Activated T-helper 2 cell treated with anti-CD3 and anti-CD28 coated beads, Interferon-gamma antibody, Interleukin-2, Interleukin-4, amounts not matched to agents 10 μg/mL and 5 μg/mL and 100 μg/mL, durations not matched to agents 14 hours and 24 hours and 36 hours (primary cell): ENCODE measurements at regions of chr5 and their contacts with region 1.

Region 1: GRCh38 chr5:59188419-59189225 is 605.7 kb downstream of the RAB3C start:
- DNase-seq: peak; percentile 42
- H3K4me3 Mint-ChIP-seq: peak overlapping the region; percentile 31
- H3K27ac Mint-ChIP-seq: no peak overlapping the region
- H3K4me1 Mint-ChIP-seq: peaks cover 27% of the 10 kb centered on the region
- H3K27me3 Mint-ChIP-seq: peaks cover 18% of the 10 kb centered on the region

Region 2: DNA sequence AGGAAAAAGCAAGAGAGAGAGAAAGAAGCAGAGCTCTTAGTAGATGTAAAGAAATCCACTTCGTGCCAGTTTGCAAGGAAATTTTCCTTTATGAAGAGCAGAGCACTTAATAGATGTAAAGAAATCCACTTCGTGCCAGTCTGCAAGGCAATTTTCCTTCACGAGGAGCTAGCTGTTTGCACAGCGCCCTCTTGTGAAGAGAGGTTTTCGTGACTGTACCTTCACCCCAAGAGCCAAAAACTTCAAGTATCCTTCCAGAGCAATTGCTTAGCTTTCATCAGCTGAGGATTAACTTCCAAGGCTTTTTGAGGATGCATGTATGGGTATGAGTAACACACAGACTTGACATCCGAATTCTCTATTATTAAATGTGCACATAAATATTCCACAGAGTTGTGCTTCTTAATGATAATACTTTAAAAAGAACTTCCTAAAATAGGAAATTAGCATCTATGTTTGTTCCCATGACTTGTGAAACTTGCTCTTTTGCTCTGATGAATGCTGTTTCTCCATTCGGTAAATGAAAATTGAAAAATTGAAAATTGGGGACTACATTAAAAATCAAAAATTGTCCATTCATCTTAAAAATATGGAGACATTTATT is 179.3 kb after region 1 on chr5:
- intact Hi-C with region 1: loop called (anchors 1 kb)
- DNase-seq: peak; percentile 22
- H3K4me3 Mint-ChIP-seq: no peak overlapping the region
- H3K27ac Mint-ChIP-seq: no peak overlapping the region
- H3K4me1 Mint-ChIP-seq: peaks cover 3% of the 10 kb centered on the region
- H3K27me3 Mint-ChIP-seq: peaks cover 10% of the 10 kb centered on the region

Region 3: GRCh38 chr5:59380350-59380951 is 191.8 kb after region 1 on chr5:
- intact Hi-C with region 1: loop called (anchors 1 kb)
- DNase-seq: no peak
- H3K4me3 Mint-ChIP-seq: no peak overlapping the region
- H3K27ac Mint-ChIP-seq: no peak overlapping the region
- H3K4me1 Mint-ChIP-seq: peaks cover 5% of the 10 kb centered on the region
- H3K27me3 Mint-ChIP-seq: peaks cover 5% of the 10 kb centered on the region

Region 4: DNA sequence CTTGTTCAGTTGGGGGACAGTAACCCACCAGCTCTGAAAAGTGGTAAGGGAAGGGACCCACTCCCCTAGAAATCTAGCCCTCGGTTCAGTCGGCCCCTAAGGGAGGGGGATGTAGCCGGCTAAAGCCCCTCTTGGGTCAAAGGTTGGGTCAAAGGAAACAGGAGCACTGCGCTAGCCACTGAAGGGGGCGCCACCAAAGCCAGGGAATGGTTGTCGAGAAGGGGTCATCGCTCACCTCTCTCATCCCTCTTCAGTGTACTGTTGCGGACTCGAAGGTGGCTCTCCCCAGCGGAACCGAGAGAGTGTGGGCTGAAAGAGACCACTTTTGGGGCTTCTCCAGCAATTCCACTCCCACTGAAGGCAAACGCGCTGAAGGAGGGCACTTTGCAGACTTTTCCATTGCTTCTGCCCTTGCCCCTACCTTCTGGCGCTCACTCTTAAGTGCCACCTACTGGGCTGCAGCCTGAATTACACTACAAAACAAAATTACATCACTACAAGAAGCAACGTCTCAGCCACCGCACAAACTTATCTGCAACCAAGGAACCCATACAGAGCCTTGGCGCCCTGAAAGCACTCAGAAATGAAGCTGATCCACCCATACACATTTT is 308.0 kb after region 1 on chr5:
- intact Hi-C with region 1: loop called (anchors 5 kb)
- DNase-seq: no peak
- H3K4me3 Mint-ChIP-seq: no peak overlapping the region
- H3K27ac Mint-ChIP-seq: no peak overlapping the region
- H3K4me1 Mint-ChIP-seq: no peaks in the 10 kb centered on the region
- H3K27me3 Mint-ChIP-seq: peaks cover 12% of the 10 kb centered on the region

Region 5: DNA sequence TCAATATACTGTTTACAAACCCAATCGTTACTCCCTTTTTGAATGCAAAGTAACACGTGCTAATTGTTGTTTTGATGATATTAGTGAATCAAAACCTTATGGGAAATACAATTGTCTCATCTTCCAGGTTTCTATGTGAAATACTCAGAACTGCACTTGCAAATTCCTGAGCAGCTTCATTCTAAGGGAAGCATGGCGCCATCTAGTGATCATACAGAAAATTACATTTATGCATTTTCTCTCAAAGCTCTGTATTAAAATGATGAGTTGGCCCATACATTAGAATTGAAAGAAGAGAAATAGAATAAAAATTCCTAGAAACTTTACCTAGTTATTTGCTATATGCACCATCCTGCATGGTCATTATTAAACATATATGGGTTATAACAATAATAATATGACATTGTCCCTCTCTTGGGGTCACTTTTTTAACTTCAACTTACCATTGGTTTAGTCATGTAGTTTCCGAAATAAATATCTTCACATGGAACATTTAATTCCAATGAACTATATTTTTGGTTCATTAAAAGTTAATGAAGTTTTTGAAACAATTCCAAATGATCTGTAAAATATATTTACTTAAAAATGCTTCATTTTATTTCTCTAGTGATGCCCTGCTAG is 484.9 kb after region 1 on chr5:
- intact Hi-C with region 1: loop called (anchors 1 kb)
- DNase-seq: no peak
- H3K4me3 Mint-ChIP-seq: no peak overlapping the region
- H3K27ac Mint-ChIP-seq: no peak overlapping the region
- H3K4me1 Mint-ChIP-seq: no peaks in the 10 kb centered on the region
- H3K27me3 Mint-ChIP-seq: peaks cover 4% of the 10 kb centered on the region

Region 6: DNA sequence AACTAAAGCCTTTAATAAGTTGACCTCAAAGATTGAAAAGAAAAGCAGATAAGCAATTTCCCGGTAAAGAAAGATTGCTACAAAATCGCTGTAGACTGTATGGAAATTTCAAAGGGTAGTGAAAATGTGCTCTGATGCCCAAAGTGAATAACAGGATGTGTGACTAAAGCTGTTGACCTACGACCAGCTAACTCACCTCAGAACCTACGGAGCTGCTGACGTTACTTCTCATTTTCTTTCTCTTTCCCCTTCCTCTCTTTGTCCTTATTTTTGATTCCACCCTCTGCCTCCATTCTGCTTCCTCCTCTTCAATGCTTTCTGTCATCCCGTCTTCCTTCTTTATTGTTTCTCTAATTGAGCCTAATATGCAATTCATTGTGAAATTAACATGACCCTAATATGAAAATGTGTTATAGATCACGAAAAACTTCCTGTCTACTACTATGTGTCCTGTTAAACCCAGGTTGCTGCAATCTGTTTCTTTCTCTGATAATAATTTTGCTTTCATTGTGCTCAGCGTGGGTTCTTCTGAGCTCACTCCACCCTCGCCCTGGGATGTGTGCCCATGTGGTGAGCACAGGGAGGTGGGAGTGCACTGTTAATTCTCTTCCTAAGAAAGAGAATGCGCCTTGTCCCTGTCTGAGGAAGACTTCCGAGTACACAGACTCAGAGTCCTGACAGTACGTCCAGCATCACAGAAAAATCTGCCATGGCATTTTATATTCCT is 601.9 kb after region 1 on chr5:
- intact Hi-C with region 1: loop called (anchors 5 kb)
- DNase-seq: no peak
- H3K4me3 Mint-ChIP-seq: peak overlapping the region; percentile 54
- H3K27ac Mint-ChIP-seq: peak overlapping the region; percentile 97
- H3K4me1 Mint-ChIP-seq: peaks cover 52% of the 10 kb centered on the region
- H3K27me3 Mint-ChIP-seq: peaks cover 1% of the 10 kb centered on the region